ENCODE measurements at regions of chr4 and their contacts with region 1.

Region 1: GRCh38 chr4:26342328-26343037 is 21.7 kb downstream of the RBPJ start:
- DNase-seq: no peak
- ATAC-seq: no peak
- H3K4me3 Mint-ChIP-seq: no peak overlapping the region
- H3K27ac Mint-ChIP-seq: peak overlapping the region; percentile 83
- H3K4me1 Mint-ChIP-seq: peaks cover 66% of the 10 kb centered on the region
- H3K27me3 Mint-ChIP-seq: no peaks in the 10 kb centered on the region
- CTCF ChIP-seq: no peak

Region 2: DNA sequence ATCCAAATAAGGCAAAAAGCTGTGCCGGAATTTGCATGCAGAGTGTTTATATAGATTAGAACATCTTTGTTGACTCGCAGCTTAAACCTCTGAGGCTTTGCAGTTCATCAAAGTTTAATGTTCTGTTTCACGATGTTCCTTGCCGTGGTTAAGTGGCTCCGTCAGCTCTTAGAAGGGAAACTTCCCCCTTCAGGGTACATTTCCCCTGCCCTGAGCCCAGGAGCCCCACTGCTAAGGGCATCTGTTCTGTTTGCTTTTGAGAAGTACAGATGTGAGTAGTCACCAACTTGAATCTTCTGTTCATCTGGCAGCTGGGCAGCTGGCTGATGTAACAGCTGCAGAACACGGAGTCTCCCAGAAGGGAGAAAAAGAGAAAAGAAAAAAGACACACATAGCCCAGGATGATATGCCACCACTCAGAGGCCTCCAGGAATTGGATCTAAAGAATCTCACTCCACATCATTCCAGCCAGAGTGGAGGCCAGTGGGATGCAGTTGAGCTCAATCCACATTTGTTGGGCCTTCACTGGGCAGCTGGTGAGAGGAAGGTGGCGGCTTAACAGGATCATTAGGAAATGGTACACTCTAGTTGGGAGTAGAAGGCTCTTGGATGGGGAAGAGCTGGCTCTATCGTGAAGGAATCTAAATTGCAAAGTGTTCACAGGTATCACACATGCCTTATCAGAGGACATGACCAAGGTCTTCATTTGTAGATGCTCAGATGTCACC is 200.4 kb before region 1 on chr4:
- CTCF ChIA-PET with region 1: no interaction called
- POLR2A ChIA-PET with region 1: no interaction called
- DNase-seq: no peak
- ATAC-seq: no peak
- H3K4me3 Mint-ChIP-seq: no peak overlapping the region
- H3K27ac Mint-ChIP-seq: no peak overlapping the region
- H3K4me1 Mint-ChIP-seq: peaks cover 17% of the 10 kb centered on the region
- H3K27me3 Mint-ChIP-seq: peaks cover 4% of the 10 kb centered on the region
- CTCF ChIP-seq: no peak

Region 3: GRCh38 chr4:26319467-26319948 is 23.0 kb before region 1 on chr4:
- CTCF ChIA-PET with region 1: no interaction called
- POLR2A ChIA-PET with region 1: interaction called, 11 read pairs
- DNase-seq: peak; percentile 97
- ATAC-seq: peak; percentile 69
- H3K4me3 Mint-ChIP-seq: peak overlapping the region; percentile 91
- H3K27ac Mint-ChIP-seq: peak overlapping the region; percentile 99
- H3K4me1 Mint-ChIP-seq: peaks cover 28% of the 10 kb centered on the region
- H3K27me3 Mint-ChIP-seq: peaks cover 3% of the 10 kb centered on the region; the same call in 1 of the 2 replicates
- CTCF ChIP-seq: no peak

Region 4: GRCh38 chr4:26568446-26568994 is 226.0 kb after region 1 on chr4:
- CTCF ChIA-PET with region 1: no interaction called
- POLR2A ChIA-PET with region 1: no interaction called
- DNase-seq: no peak
- ATAC-seq: no peak
- H3K4me3 Mint-ChIP-seq: no peak overlapping the region
- H3K27ac Mint-ChIP-seq: no peak overlapping the region
- H3K4me1 Mint-ChIP-seq: 0 out of 2 replicates have a peak, but pooled peaks cover 3% of the 10 kb centered on the region
- H3K27me3 Mint-ChIP-seq: no peaks in the 10 kb centered on the region; the same call in 1 of the 2 replicates
- CTCF ChIP-seq: no peak